ENCODE measurements at regions of chr12 and their contacts with region 1.

Region 1: GRCh38 chr12:9711664-9712063 is 21.2 kb downstream of the CLECL1 start:
- DNase-seq: no peak
- H3K4me3 ChIP-seq: no peak overlapping the region
- H3K27ac ChIP-seq: no peak overlapping the region
- H3K4me1 ChIP-seq: no peaks in the 10 kb centered on the region
- H3K27me3 ChIP-seq: no peaks in the 10 kb centered on the region
- CTCF ChIP-seq: no peak
- POLR2A ChIP-seq: no peak

Region 2: DNA sequence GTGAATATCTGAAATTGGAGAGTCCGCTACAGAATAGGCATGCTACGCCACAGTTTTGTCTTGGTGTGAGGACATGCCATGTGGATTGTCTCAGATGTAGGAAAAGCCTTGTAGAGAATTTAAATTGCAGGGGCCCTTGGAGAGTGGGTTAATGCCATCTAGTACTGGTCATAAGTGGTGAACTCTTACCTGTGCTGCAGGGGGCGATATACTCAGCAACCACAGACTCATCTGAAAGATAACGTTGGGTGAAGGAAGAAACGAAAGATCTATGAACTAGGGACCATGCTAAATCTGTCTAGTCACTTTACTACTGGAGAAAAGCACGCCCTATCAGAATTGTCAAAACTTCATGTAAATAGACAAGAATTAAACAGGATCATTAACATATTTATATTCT is 562.3 kb before region 1 on chr12:
- intact Hi-C with region 1: no loop called
- DNase-seq: no peak
- H3K4me3 ChIP-seq: no peak overlapping the region
- H3K27ac ChIP-seq: no peak overlapping the region
- H3K4me1 ChIP-seq: no peaks in the 10 kb centered on the region
- H3K27me3 ChIP-seq: no peaks in the 10 kb centered on the region
- CTCF ChIP-seq: no peak
- POLR2A ChIP-seq: no peak

Region 3: DNA sequence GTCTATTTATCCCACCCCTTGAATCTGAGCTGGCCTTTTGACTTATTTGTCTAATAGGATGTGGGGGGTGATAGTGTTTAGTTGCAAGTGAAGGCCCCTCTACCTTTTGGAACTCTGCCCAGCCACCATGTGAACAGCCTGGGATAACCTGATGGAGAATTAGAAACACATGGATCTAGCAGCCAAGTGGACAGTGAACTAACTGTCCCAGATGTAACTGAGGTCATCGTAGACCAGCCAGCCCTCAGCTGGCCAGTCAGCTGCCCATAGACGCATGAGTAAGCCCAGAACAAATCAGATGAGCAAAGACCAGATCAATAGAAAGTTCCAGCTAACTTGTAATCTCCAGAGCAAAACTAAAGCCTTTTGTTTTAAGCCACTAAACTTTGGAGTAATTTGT is 122.9 kb before region 1 on chr12:
- intact Hi-C with region 1: no loop called
- DNase-seq: no peak
- H3K4me3 ChIP-seq: no peak overlapping the region
- H3K27ac ChIP-seq: no peak overlapping the region
- H3K4me1 ChIP-seq: no peaks in the 10 kb centered on the region
- H3K27me3 ChIP-seq: no peaks in the 10 kb centered on the region
- CTCF ChIP-seq: no peak
- POLR2A ChIP-seq: no peak

Region 4: DNA sequence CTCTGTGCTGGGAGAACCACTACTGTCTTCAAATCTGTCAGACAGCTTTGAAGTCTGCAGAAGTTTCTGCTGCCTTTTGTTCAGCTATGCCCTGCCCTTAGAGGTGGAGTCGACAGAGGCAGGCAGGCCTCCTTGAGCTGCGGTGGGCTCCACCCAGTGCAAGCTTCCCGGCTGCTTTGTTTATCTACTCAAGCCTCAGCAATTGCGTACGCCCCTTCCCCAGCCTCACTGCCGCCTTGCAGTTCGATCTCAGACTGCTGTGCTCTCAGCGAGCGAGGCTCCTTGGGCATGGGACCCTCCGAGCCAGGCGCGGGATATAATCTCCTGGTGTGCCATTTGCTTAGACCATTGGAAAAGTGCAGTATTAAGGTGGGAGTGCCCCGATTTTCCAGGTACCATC is 78.9 kb before region 1 on chr12:
- intact Hi-C with region 1: loop called (anchors 2 kb)
- DNase-seq: no peak
- H3K4me3 ChIP-seq: no peak overlapping the region
- H3K27ac ChIP-seq: no peak overlapping the region
- H3K4me1 ChIP-seq: no peaks in the 10 kb centered on the region
- H3K27me3 ChIP-seq: no peaks in the 10 kb centered on the region
- CTCF ChIP-seq: no peak
- POLR2A ChIP-seq: no peak

Region 5: GRCh38 chr12:9813821-9814809 is 102.5 kb after region 1 on chr12:
- intact Hi-C with region 1: no loop called
- DNase-seq: peak; percentile 62 to 75
- H3K4me3 ChIP-seq: no peak overlapping the region
- H3K27ac ChIP-seq: no peak overlapping the region
- H3K4me1 ChIP-seq: no peaks in the 10 kb centered on the region
- H3K27me3 ChIP-seq: no peaks in the 10 kb centered on the region
- CTCF ChIP-seq: peak; percentile 42 to 82 (median 65)
- POLR2A ChIP-seq: no peak